ENCODE measurements at regions of chr17 and their contacts with region 1.

Region 1: GRCh38 chr17:8109661-8110464 is 8.5 kb downstream of the ALOXE3 start:
- DNase-seq: peak; percentile 85
- H3K4me3 ChIP-seq: peak overlapping the region; percentile 63
- H3K27ac ChIP-seq: no peak overlapping the region
- H3K4me1 ChIP-seq: peaks cover 12% of the 10 kb centered on the region
- CTCF ChIP-seq: peak; percentile 88

Region 2: GRCh38 chr17:7867881-7868329 is 242.0 kb before region 1 on chr17:
- CTCF ChIA-PET with region 1: no interaction called
- POLR2A ChIA-PET with region 1: no interaction called
- intact Hi-C with region 1: no loop called
- DNase-seq: no peak
- H3K4me3 ChIP-seq: no peak overlapping the region
- H3K27ac ChIP-seq: no peak overlapping the region
- H3K4me1 ChIP-seq: peaks cover 13% of the 10 kb centered on the region
- CTCF ChIP-seq: no peak

Region 3: DNA sequence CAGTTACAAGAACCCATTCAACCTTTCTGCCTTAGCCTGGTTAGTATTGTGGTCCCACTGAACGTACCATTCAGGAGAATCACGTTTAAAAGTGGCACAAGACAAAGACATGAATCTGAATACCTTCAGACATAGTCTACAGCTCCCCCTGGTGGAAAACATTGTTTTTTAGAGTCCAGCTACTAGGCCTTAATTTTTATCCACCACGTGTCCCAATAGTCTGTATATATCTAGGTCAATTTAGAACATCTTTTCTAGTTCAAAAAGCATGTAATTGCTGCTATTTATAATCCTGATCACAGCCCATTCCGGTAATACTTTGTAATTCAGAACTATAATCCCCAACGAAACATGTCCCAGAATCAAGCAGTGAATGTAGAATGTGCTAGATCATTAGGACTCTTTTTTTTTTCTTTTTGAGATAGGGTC is 121.1 kb before region 1 on chr17:
- CTCF ChIA-PET with region 1: no interaction called
- POLR2A ChIA-PET with region 1: no interaction called
- intact Hi-C with region 1: no loop called
- DNase-seq: peak; percentile 93
- H3K4me3 ChIP-seq: no peak overlapping the region
- H3K27ac ChIP-seq: peak overlapping the region; percentile 39
- H3K4me1 ChIP-seq: peaks cover 13% of the 10 kb centered on the region
- CTCF ChIP-seq: peak; percentile 81

Region 4: DNA sequence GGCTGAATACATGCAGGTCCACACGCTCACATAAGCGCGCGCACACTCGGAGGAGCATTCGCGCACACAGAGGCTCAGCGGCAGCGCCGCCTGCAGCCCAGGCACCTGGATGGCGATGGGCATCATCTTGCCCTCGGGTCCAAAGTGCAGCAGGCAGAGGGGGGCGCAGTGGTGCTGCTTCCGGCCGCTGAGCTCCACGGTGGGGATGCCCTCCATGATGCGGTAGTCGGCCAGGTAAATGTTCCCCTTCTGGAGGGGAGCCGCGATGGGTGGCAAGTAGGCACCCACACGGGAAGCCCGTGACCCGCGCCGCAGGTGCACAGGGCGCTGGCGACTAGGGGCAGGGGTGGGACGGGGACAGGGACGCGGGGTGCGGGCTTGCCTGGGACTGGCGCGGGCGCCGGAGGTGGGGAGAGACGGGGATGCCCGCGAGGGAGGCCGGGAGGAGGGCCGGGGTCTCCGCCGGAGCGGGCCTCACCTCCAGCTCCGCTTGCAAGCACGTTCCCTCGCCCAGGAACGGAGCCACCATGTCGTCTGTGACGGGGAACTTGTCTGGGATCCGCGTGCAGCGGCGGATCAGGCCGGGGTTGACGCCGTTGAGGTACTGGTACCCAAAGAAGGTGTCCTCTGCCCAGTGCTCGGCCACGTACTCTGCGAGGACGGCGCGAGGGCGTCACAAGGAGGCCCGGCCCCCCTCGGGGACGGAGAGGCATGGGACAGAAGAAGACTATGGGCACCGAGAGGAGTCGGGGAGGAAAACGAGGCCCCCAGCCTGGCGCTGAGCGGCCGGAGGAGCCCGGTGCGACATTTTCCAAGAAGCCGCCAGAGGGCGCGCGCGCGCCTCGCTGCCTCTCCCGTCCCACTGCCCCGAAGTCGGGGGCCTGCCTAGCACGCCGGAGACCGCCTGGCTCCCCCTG is 30.3 kb before region 1 on chr17:
- CTCF ChIA-PET with region 1: interaction called, 7 read pairs
- POLR2A ChIA-PET with region 1: no interaction called
- intact Hi-C with region 1: loop called (anchors 1 kb)
- DNase-seq: peak; percentile 90
- H3K4me3 ChIP-seq: peak overlapping the region; percentile 74
- H3K27ac ChIP-seq: peak overlapping the region; percentile 67
- H3K4me1 ChIP-seq: peaks cover 6% of the 10 kb centered on the region
- CTCF ChIP-seq: peak; percentile 84

Region 5: DNA sequence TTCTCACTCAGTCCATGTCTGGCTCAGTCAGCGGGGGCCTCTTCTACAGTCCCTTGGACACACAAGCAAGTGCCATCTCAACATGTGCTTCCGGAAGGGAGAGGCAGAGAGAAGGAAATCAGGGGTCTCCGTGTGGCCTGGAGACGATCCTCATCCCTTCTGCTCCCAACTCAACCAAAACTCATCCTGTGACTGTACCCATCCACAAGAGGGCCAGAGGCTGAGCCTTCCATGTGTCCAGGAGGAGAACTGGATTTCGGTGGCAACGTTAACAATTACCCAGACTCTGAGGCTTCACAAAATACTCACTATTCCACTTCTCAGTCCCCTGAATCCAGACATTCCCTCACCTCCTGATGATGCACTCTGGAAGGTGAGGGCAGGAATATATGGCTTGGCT is 14.5 kb before region 1 on chr17:
- CTCF ChIA-PET with region 1: interaction called, 7 read pairs
- POLR2A ChIA-PET with region 1: interaction called, 9 read pairs
- intact Hi-C with region 1: loop called (anchors 2 kb)
- DNase-seq: no peak
- H3K4me3 ChIP-seq: no peak overlapping the region
- H3K27ac ChIP-seq: no peak overlapping the region
- H3K4me1 ChIP-seq: peaks cover 23% of the 10 kb centered on the region
- CTCF ChIP-seq: no peak